ENCODE measurements at regions of chr6 and their contacts with region 1.

Region 1: DNA sequence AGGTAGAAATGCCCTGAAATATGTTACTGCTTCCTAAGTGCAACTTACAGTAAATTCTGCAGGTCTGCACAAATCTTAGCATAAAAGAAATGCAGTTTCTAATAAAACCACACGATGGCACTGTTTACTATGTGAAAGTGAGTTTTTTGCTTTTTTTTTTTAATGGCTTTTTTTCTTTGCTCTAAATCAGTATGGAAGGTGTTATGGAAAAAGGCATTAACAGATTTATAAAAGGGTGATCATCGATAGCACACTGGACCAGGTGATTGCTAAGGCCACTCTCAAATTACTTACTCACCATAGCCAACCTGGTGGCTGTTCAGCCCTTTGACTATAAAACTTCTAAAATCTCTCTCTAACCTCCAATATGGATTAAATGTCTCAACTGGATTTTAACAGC is 45.8 kb downstream of the AHI1 start:
- DNase-seq: peak; percentile 32
- ATAC-seq: no peak
- H3K4me3 ChIP-seq: no peak overlapping the region
- H3K27ac ChIP-seq: no peak overlapping the region
- H3K4me1 ChIP-seq: no peaks in the 10 kb centered on the region
- H3K27me3 ChIP-seq: no peaks in the 10 kb centered on the region
- CTCF ChIP-seq: peak; percentile 59
- EP300 ChIP-seq: no peak
- POLR2A ChIP-seq: no peak
- RAD21 ChIP-seq: no peak

Region 2: GRCh38 chr6:135191508-135192255 is 260.0 kb before region 1 on chr6:
- CTCF ChIA-PET with region 1: no interaction called
- POLR2A ChIA-PET with region 1: no interaction called
- in situ Hi-C with region 1: no loop called
- intact Hi-C with region 1: no loop called
- DNase-seq: no peak
- ATAC-seq: no peak
- H3K4me3 ChIP-seq: no peak overlapping the region
- H3K27ac ChIP-seq: no peak overlapping the region
- H3K4me1 ChIP-seq: no peaks in the 10 kb centered on the region
- H3K27me3 ChIP-seq: no peaks in the 10 kb centered on the region
- CTCF ChIP-seq: no peak
- EP300 ChIP-seq: no peak
- POLR2A ChIP-seq: no peak
- RAD21 ChIP-seq: no peak

Region 3: DNA sequence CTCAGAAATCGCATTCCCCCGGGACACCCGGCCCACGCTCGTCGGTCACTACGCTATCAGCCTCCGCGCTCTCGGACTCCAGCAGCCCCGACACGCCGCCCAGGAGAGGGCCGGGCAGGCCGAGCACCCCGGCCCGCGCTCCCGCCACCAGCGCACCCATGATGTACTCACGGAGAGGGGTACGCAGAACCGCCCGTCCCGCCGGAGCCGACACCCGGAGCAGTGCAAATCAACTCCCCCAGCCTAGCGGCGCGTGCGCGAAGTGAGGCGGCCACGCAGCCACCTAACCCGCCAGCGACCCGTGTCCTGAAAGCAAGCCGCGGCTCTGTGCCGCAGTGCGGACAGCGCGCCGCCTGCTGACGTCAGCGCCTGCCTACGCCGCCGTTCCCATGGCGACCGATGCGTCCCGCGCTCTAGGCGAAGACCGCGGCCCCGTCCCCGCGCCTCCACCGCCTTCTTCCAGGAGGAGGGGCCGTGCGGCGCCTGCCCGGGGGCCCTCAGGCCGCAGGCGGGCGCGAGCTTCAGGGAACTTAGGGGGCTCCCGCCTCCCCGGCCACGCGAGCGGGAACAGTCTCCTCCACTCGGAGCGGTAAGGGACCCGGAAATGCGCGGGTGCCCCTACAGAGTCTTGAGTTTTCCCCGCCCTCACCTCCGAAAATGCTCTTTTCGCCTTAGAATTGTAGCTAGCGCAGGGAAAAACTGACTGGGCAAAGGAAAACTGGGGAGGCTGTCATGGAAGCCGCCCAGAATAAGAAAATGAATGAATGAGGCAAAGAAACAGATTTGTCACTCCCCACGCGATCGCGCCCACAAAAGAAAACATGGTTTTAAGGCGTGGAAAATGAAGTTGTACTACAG is 45.9 kb after region 1 on chr6 and contains the start of gene AHI1:
- CTCF ChIA-PET with region 1: no interaction called
- POLR2A ChIA-PET with region 1: no interaction called
- in situ Hi-C with region 1: no loop called
- intact Hi-C with region 1: loop called (anchors 5 kb)
- DNase-seq: peak; percentile 91
- ATAC-seq: peak; percentile 95
- H3K4me3 ChIP-seq: peak within 1 kb of the TSS; percentile 78 to 92 (median 89)
- H3K27ac ChIP-seq: peak within 1 kb of the TSS; percentile 94
- H3K4me1 ChIP-seq: peaks cover 18% of the 10 kb centered on the region
- H3K27me3 ChIP-seq: no peaks in the 10 kb centered on the region; a peak in 1 of 5 replicates
- CTCF ChIP-seq: peak; percentile 21; the same call in 1 of the 2 replicates
- EP300 ChIP-seq: 0 out of 4 replicates have a peak, but pooled peaks of 1 of the 2 experiments have one; percentile 4
- POLR2A ChIP-seq: peak; percentile 90 to 93
- RAD21 ChIP-seq: peak; percentile 45; the same call in 1 of the 2 replicates
- total RNA-seq, gene AHI1: 18.0 and 18.6 TPM in 2 replicates

Region 4: DNA sequence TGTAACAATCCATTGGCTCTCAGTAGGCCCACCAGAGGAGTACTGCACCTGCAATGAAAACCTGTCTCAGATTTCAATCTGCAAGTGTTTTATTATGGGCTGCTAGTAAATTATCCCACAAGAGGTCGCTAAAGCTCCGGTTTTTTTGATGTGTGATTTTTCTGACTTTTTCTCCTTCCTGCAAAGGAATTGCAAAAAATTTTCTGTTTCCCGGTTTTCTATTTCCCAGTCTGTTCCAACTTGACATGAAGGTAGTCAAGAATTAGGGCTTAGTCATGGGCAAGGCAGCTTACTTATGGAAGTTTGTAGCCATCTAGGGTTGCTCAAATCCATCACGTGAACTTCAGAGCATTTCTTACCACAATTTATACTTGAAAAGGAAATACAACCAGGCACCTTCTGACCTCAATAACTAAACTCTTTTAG is 84.3 kb after region 1 on chr6:
- CTCF ChIA-PET with region 1: interaction called, 6 read pairs
- POLR2A ChIA-PET with region 1: no interaction called
- in situ Hi-C with region 1: no loop called
- intact Hi-C with region 1: loop called (anchors 1 kb)
- DNase-seq: peak; percentile 40
- ATAC-seq: peak; percentile 71
- H3K4me3 ChIP-seq: no peak overlapping the region
- H3K27ac ChIP-seq: no peak overlapping the region
- H3K4me1 ChIP-seq: no peaks in the 10 kb centered on the region
- H3K27me3 ChIP-seq: no peaks in the 10 kb centered on the region; a peak in 1 of 5 replicates
- CTCF ChIP-seq: peak; percentile 65
- EP300 ChIP-seq: no peak
- POLR2A ChIP-seq: no peak
- RAD21 ChIP-seq: peak; percentile 52; the same call in 1 of the 2 replicates

Region 5: GRCh38 chr6:135759831-135760230 is 308.1 kb after region 1 on chr6:
- CTCF ChIA-PET with region 1: interaction called, 4 read pairs
- POLR2A ChIA-PET with region 1: no interaction called
- in situ Hi-C with region 1: no loop called
- intact Hi-C with region 1: loop called (anchors 5 kb)
- DNase-seq: peak; percentile 24
- ATAC-seq: peak; percentile 83
- H3K4me3 ChIP-seq: no peak overlapping the region
- H3K27ac ChIP-seq: no peak overlapping the region
- H3K4me1 ChIP-seq: no peaks in the 10 kb centered on the region
- H3K27me3 ChIP-seq: no peaks in the 10 kb centered on the region
- CTCF ChIP-seq: peak; percentile 47
- EP300 ChIP-seq: no peak
- POLR2A ChIP-seq: no peak
- RAD21 ChIP-seq: 0 out of 2 replicates have a peak, but pooled peaks have one; percentile 15

Region 6: GRCh38 chr6:135909737-135910387 is 458.2 kb after region 1 on chr6:
- CTCF ChIA-PET with region 1: interaction called, 13 read pairs
- POLR2A ChIA-PET with region 1: no interaction called
- in situ Hi-C with region 1: no loop called
- intact Hi-C with region 1: loop called (anchors 1 kb)
- DNase-seq: peak; percentile 70
- ATAC-seq: peak; percentile 97
- H3K4me3 ChIP-seq: no peak overlapping the region
- H3K27ac ChIP-seq: no peak overlapping the region
- H3K4me1 ChIP-seq: no peaks in the 10 kb centered on the region
- H3K27me3 ChIP-seq: 0 out of 5 replicates have a peak, but pooled peaks cover 0 to 7% of the 10 kb centered on the region in 2 experiments
- CTCF ChIP-seq: peak; percentile 81
- EP300 ChIP-seq: no peak
- POLR2A ChIP-seq: no peak
- RAD21 ChIP-seq: peak; percentile 54; the same call in 1 of the 2 replicates

Region 7: DNA sequence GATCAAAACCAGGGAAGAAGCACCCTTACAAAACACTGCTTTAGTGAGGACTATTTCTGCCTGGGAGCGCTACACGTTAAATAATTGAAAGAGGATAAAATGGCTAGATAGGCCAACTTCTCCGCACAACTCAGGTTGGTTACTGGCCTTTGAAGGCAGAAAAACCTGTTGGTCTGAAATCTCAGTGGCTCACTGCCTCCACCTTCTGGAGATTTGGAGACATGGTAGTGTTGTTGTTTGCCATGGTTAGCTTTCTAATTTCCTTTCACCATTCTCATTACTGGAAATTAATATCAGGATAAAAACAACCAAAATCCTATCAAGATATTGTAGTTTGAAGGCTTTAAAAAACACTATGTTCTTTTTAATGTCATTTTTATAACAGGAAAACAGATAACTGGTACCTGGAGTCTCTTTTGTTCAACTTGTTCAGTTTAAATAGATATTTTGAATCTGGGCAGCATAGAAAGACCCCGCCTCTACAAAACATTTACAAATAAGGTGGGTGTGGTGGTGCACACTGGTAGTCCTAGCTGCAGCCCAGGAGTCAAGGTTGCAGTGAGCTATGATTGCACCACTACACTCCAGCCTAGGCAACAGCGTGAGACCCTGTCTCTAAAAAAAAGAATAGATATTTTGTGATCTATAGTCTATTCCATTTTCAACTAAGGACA is 865.5 kb after region 1 on chr6:
- CTCF ChIA-PET with region 1: no interaction called
- POLR2A ChIA-PET with region 1: no interaction called
- in situ Hi-C with region 1: no loop called
- intact Hi-C with region 1: loop called (anchors 5 kb)
- DNase-seq: peak; percentile 62
- ATAC-seq: peak; percentile 95
- H3K4me3 ChIP-seq: no peak overlapping the region
- H3K27ac ChIP-seq: no peak overlapping the region
- H3K4me1 ChIP-seq: no peaks in the 10 kb centered on the region
- H3K27me3 ChIP-seq: no peaks in the 10 kb centered on the region; a peak in 2 of 5 replicates
- CTCF ChIP-seq: peak; percentile 86
- EP300 ChIP-seq: no peak
- POLR2A ChIP-seq: no peak
- RAD21 ChIP-seq: peak; percentile 69

Measured in HepG2 (cell line).